CD8-positive, alpha-beta T cell (primary cell): ENCODE measurements at regions of chr20 and their contacts with region 1.

Region 1: DNA sequence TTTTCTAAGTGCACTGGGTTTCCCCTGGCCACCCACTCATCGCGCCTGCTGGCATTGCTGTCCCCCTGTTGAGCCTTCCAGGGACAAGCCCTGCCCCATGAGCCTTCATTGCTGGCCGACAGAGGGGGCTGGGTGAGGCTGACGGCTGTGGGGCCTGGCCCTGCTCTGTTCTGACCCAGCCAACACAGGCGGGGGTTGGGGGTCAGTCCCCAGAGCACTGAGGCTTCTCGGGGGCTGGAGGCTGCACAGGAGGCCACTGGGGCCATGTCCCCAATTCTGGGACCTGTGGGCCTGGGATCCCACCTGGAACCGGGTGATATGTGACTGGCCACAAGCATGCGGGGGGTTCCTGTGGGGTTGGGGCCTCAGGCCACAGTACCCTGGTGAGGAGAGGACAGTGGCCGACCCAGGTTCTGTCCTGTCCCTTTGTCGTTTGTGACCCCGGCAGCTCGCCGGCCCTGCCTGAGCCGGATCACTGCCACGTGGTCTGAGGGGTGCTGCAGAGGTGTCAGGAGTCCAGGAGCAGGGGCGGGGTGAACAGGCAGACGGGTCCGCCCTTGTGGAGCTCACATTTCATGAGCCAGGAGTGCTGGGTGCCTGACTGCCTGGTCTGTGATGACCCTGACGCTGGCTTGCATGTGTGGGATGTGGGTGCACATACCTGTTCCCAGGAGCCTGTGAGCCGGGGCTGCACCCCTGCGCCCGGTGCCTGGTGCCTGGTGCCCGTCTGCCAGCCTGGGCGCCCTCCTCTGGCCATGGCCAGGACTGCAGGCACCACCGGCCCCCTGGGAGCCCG is 2.1 kb upstream of the COL20A1 start:
- DNase-seq: peak; percentile 36 to 73 (median 62)
- ATAC-seq: peak; percentile 80
- H3K4me3 ChIP-seq: no peak overlapping the region
- H3K4me3 Mint-ChIP-seq: no peak overlapping the region
- H3K27ac ChIP-seq: no peak overlapping the region
- H3K27ac Mint-ChIP-seq: no peak overlapping the region
- H3K4me1 ChIP-seq: peaks cover 11% of the 10 kb centered on the region
- H3K4me1 Mint-ChIP-seq: peaks cover 8% of the 10 kb centered on the region
- H3K27me3 ChIP-seq: no peaks in the 10 kb centered on the region
- H3K27me3 Mint-ChIP-seq: peaks cover 6% of the 10 kb centered on the region
- CTCF ChIP-seq: peak; percentile 76

Region 2: GRCh38 chr20:63234739-63235398 is 56.0 kb before region 1 on chr20:
- CTCF ChIA-PET with region 1: interaction called, 3 read pairs
- POLR2A ChIA-PET with region 1: no interaction called
- intact Hi-C with region 1: loop called in 1 of 2 experiments (anchors 5 kb)
- DNase-seq: peak in 4 of 9 experiments; percentile 31 to 49 (median 40)
- ATAC-seq: peak; percentile 59
- H3K4me3 ChIP-seq: no peak overlapping the region
- H3K4me3 Mint-ChIP-seq: no peak overlapping the region
- H3K27ac ChIP-seq: no peak overlapping the region
- H3K27ac Mint-ChIP-seq: no peak overlapping the region
- H3K4me1 ChIP-seq: peaks cover 13% of the 10 kb centered on the region
- H3K4me1 Mint-ChIP-seq: peaks cover 15% of the 10 kb centered on the region
- H3K27me3 ChIP-seq: peaks cover 0 to 6% of the 10 kb centered on the region in 2 experiments
- H3K27me3 Mint-ChIP-seq: peaks cover 22% of the 10 kb centered on the region
- CTCF ChIP-seq: peak; percentile 47

Region 3: GRCh38 chr20:63246490-63247288 is 44.2 kb before region 1 on chr20:
- CTCF ChIA-PET with region 1: no interaction called
- POLR2A ChIA-PET with region 1: no interaction called
- intact Hi-C with region 1: no loop called
- DNase-seq: no peak
- ATAC-seq: no peak
- H3K4me3 ChIP-seq: no peak overlapping the region
- H3K4me3 Mint-ChIP-seq: no peak overlapping the region
- H3K27ac ChIP-seq: no peak overlapping the region
- H3K27ac Mint-ChIP-seq: no peak overlapping the region
- H3K4me1 ChIP-seq: no peaks in the 10 kb centered on the region
- H3K4me1 Mint-ChIP-seq: peaks cover 1% of the 10 kb centered on the region
- H3K27me3 ChIP-seq: peaks cover 0 to 8% of the 10 kb centered on the region in 2 experiments
- H3K27me3 Mint-ChIP-seq: peaks cover 22% of the 10 kb centered on the region
- CTCF ChIP-seq: no peak